ENCODE measurements at regions of chr13 and their contacts with region 1.

Region 1: GRCh38 chr13:19587635-19588300 is 26.4 kb upstream of the TPTE2 start:
- DNase-seq: peak; percentile 30
- H3K4me3 Mint-ChIP-seq: peak overlapping the region; percentile 68
- H3K27ac Mint-ChIP-seq: peak overlapping the region; percentile 88
- H3K4me1 Mint-ChIP-seq: peaks cover 22% of the 10 kb centered on the region
- H3K27me3 Mint-ChIP-seq: no peaks in the 10 kb centered on the region

Region 2: GRCh38 chr13:19332380-19332779 is 255.4 kb before region 1 on chr13:
- CTCF ChIA-PET with region 1: no interaction called
- POLR2A ChIA-PET with region 1: no interaction called
- intact Hi-C with region 1: loop called (anchors 10 kb)
- DNase-seq: no peak
- H3K4me3 Mint-ChIP-seq: no peak overlapping the region
- H3K27ac Mint-ChIP-seq: no peak overlapping the region
- H3K4me1 Mint-ChIP-seq: no peaks in the 10 kb centered on the region
- H3K27me3 Mint-ChIP-seq: peaks cover 8% of the 10 kb centered on the region

Region 3: GRCh38 chr13:19362946-19363510 is 224.7 kb before region 1 on chr13:
- CTCF ChIA-PET with region 1: no interaction called
- POLR2A ChIA-PET with region 1: no interaction called
- intact Hi-C with region 1: no loop called
- DNase-seq: no peak
- H3K4me3 Mint-ChIP-seq: no peak overlapping the region
- H3K27ac Mint-ChIP-seq: no peak overlapping the region
- H3K4me1 Mint-ChIP-seq: no peaks in the 10 kb centered on the region
- H3K27me3 Mint-ChIP-seq: no peaks in the 10 kb centered on the region

Region 4: GRCh38 chr13:19601749-19602725 is 14.3 kb after region 1 on chr13:
- CTCF ChIA-PET with region 1: interaction called, 6 read pairs
- POLR2A ChIA-PET with region 1: no interaction called
- intact Hi-C with region 1: loop called (anchors 2 kb)
- DNase-seq: peak; percentile 56
- H3K4me3 Mint-ChIP-seq: peak overlapping the region; percentile 50
- H3K27ac Mint-ChIP-seq: no peak overlapping the region
- H3K4me1 Mint-ChIP-seq: no peaks in the 10 kb centered on the region
- H3K27me3 Mint-ChIP-seq: peaks cover 41% of the 10 kb centered on the region

Region 5: DNA sequence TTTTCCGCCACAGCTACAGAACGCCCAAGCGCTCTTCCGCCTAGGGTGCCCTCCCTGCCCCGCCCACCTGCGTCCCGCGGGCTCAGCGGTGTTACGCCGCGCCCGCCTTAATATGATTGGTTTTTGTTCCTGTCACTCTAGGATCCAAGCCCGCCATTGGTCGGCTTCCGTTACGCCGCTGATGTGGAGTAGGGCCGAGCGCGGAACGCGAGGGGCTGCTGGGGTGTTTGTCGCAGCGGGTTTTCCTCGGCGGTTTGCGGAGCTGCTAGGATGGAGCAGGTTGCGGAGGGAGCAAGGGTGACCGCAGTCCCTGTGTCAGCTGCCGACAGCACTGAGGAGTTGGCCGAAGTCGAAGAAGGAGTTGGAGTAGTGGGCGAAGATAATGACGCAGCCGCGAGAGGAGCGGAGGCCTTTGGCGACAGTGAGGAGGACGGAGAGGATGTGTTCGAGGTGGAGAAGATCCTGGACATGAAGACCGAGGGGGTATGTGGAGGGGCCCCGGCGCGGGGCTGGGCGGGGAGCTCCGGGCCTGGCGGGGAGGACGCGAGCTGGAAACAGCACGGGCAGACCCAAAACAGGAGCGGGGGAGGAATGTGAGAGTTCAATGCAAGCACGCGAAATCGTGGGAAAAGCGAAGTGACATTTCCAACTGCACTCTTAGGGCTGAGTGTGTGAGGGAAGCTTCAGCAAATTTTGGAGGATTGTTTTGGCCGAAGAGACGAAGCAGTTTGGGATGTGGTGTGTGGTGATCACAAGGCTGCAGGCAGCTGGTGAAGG is 45.9 kb after region 1 on chr13 and contains the start of gene MPHOSPH8:
- CTCF ChIA-PET with region 1: interaction called, 5 read pairs
- POLR2A ChIA-PET with region 1: no interaction called
- intact Hi-C with region 1: loop called (anchors 1 kb)
- DNase-seq: peak; percentile 96
- H3K4me3 Mint-ChIP-seq: peak within 1 kb of the TSS; percentile 100
- H3K27ac Mint-ChIP-seq: peak within 1 kb of the TSS; percentile 98
- H3K4me1 Mint-ChIP-seq: peaks cover 25% of the 10 kb centered on the region
- H3K27me3 Mint-ChIP-seq: peaks cover 2% of the 10 kb centered on the region
- total RNA-seq, gene MPHOSPH8: 32.6 to 37.6 TPM

Region 6: DNA sequence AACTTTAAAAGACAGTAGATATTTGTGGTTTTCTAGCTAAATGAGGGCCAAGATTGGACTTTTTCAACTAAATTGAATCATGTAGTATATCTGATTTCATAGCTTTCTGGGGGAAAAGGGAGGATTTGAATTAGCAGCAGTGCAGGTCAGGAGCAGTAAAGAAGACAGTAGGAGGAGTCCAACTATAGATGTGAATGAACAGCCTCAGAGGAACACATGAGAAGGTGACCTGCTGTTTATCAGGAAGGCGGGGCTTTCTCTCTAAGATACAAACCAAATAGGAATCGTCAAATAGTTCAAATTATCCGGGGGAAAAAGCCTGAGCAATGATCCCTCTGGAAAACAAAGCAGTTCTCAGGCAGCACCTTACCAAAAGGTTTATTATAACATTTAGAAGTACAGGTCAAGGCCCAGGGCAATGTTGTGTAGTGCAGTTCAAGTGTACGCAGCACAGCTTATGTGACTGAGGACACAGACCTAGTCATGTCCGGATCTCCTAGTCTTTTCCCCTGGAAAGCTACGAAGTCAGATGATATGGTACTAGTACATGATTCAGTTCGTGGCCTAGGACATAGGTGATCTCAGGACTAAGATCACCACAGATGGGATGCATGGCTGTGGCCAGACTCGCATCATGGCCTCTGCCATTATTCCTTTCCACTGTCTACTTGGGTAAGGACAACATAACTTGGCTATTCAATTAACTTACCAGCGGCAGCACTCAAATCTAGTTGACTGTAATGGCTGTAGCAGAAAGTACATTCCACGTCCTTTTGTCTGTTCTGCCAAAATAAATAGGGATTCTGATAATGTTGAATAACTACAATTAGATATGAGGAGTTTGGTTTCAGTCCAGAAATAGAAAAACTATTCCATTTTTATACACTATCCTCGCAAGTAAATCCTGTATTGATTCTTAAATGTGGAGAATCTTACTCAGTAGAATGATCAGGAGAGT is 86.0 kb after region 1 on chr13:
- CTCF ChIA-PET with region 1: no interaction called
- POLR2A ChIA-PET with region 1: no interaction called
- intact Hi-C with region 1: no loop called
- DNase-seq: no peak
- H3K4me3 Mint-ChIP-seq: no peak overlapping the region
- H3K27ac Mint-ChIP-seq: peak overlapping the region; percentile 46
- H3K4me1 Mint-ChIP-seq: peaks cover 7% of the 10 kb centered on the region
- H3K27me3 Mint-ChIP-seq: no peaks in the 10 kb centered on the region

Region 7: GRCh38 chr13:19782049-19782726 is 194.4 kb after region 1 on chr13:
- CTCF ChIA-PET with region 1: no interaction called
- POLR2A ChIA-PET with region 1: no interaction called
- intact Hi-C with region 1: loop called (anchors 5 kb)
- DNase-seq: peak; percentile 72
- H3K4me3 Mint-ChIP-seq: peak overlapping the region; percentile 98
- H3K27ac Mint-ChIP-seq: peak overlapping the region; percentile 99
- H3K4me1 Mint-ChIP-seq: peaks cover 6% of the 10 kb centered on the region
- H3K27me3 Mint-ChIP-seq: peaks cover 1% of the 10 kb centered on the region